ENCODE measurements at regions of chr15 and their contacts with region 1.

Region 1: GRCh38 chr15:83595191-83595590 is 58.7 kb upstream of the ADAMTSL3 start:
- DNase-seq: no peak
- H3K4me3 ChIP-seq: no peak overlapping the region
- H3K27ac ChIP-seq: no peak overlapping the region
- H3K4me1 ChIP-seq: no peaks in the 10 kb centered on the region
- H3K27me3 ChIP-seq: no peaks in the 10 kb centered on the region
- CTCF ChIP-seq: no peak

Region 2: GRCh38 chr15:83545804-83546511 is 49.2 kb before region 1 on chr15:
- intact Hi-C with region 1: no loop called
- DNase-seq: no peak
- H3K4me3 ChIP-seq: no peak overlapping the region
- H3K27ac ChIP-seq: no peak overlapping the region
- H3K4me1 ChIP-seq: no peaks in the 10 kb centered on the region
- H3K27me3 ChIP-seq: no peaks in the 10 kb centered on the region
- CTCF ChIP-seq: no peak

Region 3: GRCh38 chr15:83626171-83626802 is 31.1 kb after region 1 on chr15:
- intact Hi-C with region 1: loop called (anchors 2 kb)
- DNase-seq: no peak
- H3K4me3 ChIP-seq: no peak overlapping the region
- H3K27ac ChIP-seq: no peak overlapping the region
- H3K4me1 ChIP-seq: no peaks in the 10 kb centered on the region
- H3K27me3 ChIP-seq: no peaks in the 10 kb centered on the region
- CTCF ChIP-seq: no peak